H1 (cell line): ENCODE measurements at regions of chr2 and their contacts with region 1.

Region 1: DNA sequence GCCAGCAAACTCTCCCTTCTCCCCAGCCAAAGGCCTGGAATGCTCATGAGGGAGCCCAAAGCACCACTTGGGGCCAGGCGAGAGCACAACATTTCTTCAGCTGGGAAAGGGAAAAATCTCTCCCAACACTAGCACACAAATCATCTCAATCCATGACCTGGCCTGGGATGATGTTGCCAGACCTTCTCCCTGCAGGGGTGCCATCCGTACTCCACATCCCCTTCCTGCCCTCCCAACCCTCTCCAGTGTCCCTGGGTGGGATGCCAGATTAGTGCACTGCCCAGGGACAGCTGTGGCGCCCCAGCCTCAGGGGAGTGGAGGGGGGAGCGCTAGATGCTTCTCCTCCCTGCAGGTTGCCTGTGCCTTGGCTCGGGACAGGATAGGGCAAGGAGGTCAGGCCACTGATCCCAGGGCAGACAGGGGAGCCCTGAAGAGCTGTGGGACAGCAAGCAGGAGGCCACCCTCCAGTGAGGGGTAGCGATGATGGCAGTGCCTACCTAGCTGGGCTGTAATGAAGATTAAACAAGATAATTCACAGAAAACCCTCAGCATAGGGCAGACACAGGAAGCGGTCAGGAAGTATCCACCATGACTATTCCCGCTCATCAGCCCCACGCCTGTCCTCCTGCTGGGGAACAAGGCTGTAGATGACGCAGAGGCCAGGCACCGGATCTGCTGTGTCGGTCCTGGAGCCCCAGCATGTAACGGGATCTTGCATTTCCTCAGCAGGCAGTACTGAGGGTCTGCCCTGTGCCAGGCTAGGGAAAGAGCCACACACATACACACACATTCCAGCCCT is 31.1 kb downstream of the SERTAD2 start:
- DNase-seq: peak in 1 of 2 experiments; percentile 53
- H3K4me3 ChIP-seq: no peak overlapping the region
- H3K27ac ChIP-seq: no peak overlapping the region
- H3K4me1 ChIP-seq: peaks cover 3 to 21% (median 13%) of the 10 kb centered on the region in 4 experiments; a peak in 6 of 7 replicates
- H3K27me3 ChIP-seq: no peaks in the 10 kb centered on the region
- CTCF ChIP-seq: peak; percentile 28 to 48 (median 43)
- EP300 ChIP-seq: no peak
- POLR2A ChIP-seq: no peak
- RAD21 ChIP-seq: peak; percentile 39 to 44

Region 2: GRCh38 chr2:64243081-64244036 is 379.3 kb before region 1 on chr2:
- CTCF ChIA-PET with region 1: no interaction called
- POLR2A ChIA-PET with region 1: no interaction called
- DNase-seq: peak in 1 of 2 experiments; percentile 22
- H3K4me3 ChIP-seq: no peak overlapping the region
- H3K27ac ChIP-seq: no peak overlapping the region
- H3K4me1 ChIP-seq: peaks cover 0 to 18% (median 6%) of the 10 kb centered on the region in 4 experiments; a peak in 3 of 7 replicates
- H3K27me3 ChIP-seq: no peaks in the 10 kb centered on the region
- CTCF ChIP-seq: no peak
- EP300 ChIP-seq: no peak
- POLR2A ChIP-seq: no peak
- RAD21 ChIP-seq: no peak

Region 3: GRCh38 chr2:64383016-64383591 is 239.5 kb before region 1 on chr2:
- CTCF ChIA-PET with region 1: no interaction called
- POLR2A ChIA-PET with region 1: no interaction called
- DNase-seq: peak in 1 of 2 experiments; percentile 39
- H3K4me3 ChIP-seq: no peak overlapping the region
- H3K27ac ChIP-seq: no peak overlapping the region
- H3K4me1 ChIP-seq: peaks cover 0 to 2% (median 0%) of the 10 kb centered on the region in 4 experiments; a peak in 1 of 7 replicates
- H3K27me3 ChIP-seq: no peaks in the 10 kb centered on the region
- CTCF ChIP-seq: no peak
- EP300 ChIP-seq: no peak
- POLR2A ChIP-seq: no peak
- RAD21 ChIP-seq: no peak

Region 4: DNA sequence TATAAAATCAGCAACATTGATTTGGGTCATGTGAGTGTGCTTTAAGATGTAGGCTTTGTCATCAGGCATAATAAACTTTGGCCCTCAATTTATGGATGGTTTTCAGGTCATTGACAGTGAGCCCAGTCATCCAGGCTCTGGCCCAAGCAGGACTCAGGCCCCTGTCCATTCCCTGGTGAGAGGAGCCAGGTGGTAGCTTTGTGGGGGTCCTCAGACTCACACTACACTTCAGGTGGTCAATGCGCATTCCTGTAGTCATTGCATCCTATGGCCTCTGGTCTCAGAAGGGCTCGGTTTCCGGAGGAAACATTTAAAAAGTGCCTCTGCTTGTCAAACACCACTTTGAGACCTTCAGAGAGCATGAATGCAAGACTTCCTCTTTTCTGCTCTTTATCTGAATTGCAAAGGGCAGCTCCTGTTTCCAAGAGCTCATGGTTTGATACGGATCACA is 148.5 kb before region 1 on chr2:
- CTCF ChIA-PET with region 1: no interaction called
- POLR2A ChIA-PET with region 1: no interaction called
- DNase-seq: no peak
- H3K4me3 ChIP-seq: no peak overlapping the region
- H3K27ac ChIP-seq: no peak overlapping the region
- H3K4me1 ChIP-seq: peaks cover 0 to 9% (median 4%) of the 10 kb centered on the region in 4 experiments; a peak in 5 of 7 replicates
- H3K27me3 ChIP-seq: no peaks in the 10 kb centered on the region
- CTCF ChIP-seq: no peak
- EP300 ChIP-seq: no peak
- POLR2A ChIP-seq: no peak; a peak in 1 of 3 replicates
- RAD21 ChIP-seq: no peak

Region 5: DNA sequence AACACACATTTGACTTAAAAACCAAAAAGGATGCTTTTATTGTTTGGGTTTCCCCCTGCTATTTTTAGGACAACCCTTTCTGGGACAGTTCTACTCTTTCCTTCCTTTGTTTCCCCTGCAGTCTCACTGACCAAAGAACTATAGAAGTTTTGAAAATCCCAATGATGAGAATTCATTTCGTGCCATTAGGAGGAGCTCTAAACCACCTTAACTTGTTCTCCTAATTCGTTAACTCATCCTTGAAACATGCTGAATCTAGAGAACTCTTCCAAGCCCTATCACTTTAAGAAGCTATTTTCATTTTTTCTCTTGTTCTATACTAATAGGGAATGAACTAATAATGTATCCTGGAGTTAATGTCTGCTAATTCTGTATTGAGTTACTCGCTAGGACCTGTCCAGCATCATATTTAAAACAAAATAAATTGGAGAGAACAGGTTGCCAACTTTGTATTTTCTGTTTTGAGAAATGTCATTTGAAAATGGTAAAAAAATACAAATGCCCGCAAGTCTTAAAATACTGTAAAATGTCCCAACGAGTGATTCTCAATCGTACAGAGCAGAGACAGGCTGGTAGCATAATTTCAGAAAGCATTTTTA is 35.7 kb before region 1 on chr2:
- CTCF ChIA-PET with region 1: interaction called, 24 read pairs
- POLR2A ChIA-PET with region 1: no interaction called
- DNase-seq: no peak
- H3K4me3 ChIP-seq: no peak overlapping the region
- H3K27ac ChIP-seq: no peak overlapping the region
- H3K4me1 ChIP-seq: peaks cover 0 to 3% (median 0%) of the 10 kb centered on the region in 4 experiments; a peak in 1 of 7 replicates
- H3K27me3 ChIP-seq: no peaks in the 10 kb centered on the region
- CTCF ChIP-seq: peak in 2 of 3 experiments; percentile 51 to 65; a peak in 2 of 4 replicates
- EP300 ChIP-seq: no peak
- POLR2A ChIP-seq: no peak
- RAD21 ChIP-seq: peak; percentile 74 to 80

Region 6: GRCh38 chr2:64595397-64596160 is 27.1 kb before region 1 on chr2:
- CTCF ChIA-PET with region 1: interaction called, 26 read pairs
- POLR2A ChIA-PET with region 1: no interaction called
- DNase-seq: no peak
- H3K4me3 ChIP-seq: no peak overlapping the region
- H3K27ac ChIP-seq: no peak overlapping the region
- H3K4me1 ChIP-seq: no peaks in the 10 kb centered on the region
- H3K27me3 ChIP-seq: no peaks in the 10 kb centered on the region
- CTCF ChIP-seq: peak in 2 of 3 experiments; percentile 64 to 68; a peak in 3 of 4 replicates
- EP300 ChIP-seq: no peak
- POLR2A ChIP-seq: no peak
- RAD21 ChIP-seq: peak; percentile 73 to 84

Region 7: GRCh38 chr2:64609227-64609941 is 13.3 kb before region 1 on chr2:
- CTCF ChIA-PET with region 1: interaction called, 389 read pairs
- POLR2A ChIA-PET with region 1: interaction called, 3 read pairs
- DNase-seq: peak in 1 of 2 experiments; percentile 81
- H3K4me3 ChIP-seq: peak overlapping the region; percentile 54 to 79 (median 64)
- H3K27ac ChIP-seq: no peak overlapping the region
- H3K4me1 ChIP-seq: peaks cover 2 to 14% (median 6%) of the 10 kb centered on the region in 4 experiments
- H3K27me3 ChIP-seq: peaks cover 0 to 11% (median 9%) of the 10 kb centered on the region in 4 experiments; a peak in 6 of 7 replicates
- CTCF ChIP-seq: peak; percentile 58 to 76 (median 68)
- EP300 ChIP-seq: no peak
- POLR2A ChIP-seq: peak in 1 of 2 experiments; percentile 38; a peak in 1 of 3 replicates
- RAD21 ChIP-seq: peak in 1 of 2 experiments; percentile 49; a peak in 2 of 4 replicates

Region 8: GRCh38 chr2:64644177-64645004 is 21.7 kb after region 1 on chr2:
- CTCF ChIA-PET with region 1: interaction called, 389 read pairs
- POLR2A ChIA-PET with region 1: interaction called, 4 read pairs
- DNase-seq: peak; percentile 71 to 75
- H3K4me3 ChIP-seq: peak overlapping the region; percentile 48 to 64 (median 58)
- H3K27ac ChIP-seq: peak overlapping the region; percentile 49
- H3K4me1 ChIP-seq: peaks cover 6 to 22% (median 14%) of the 10 kb centered on the region in 4 experiments
- H3K27me3 ChIP-seq: peaks cover 4 to 19% (median 11%) of the 10 kb centered on the region in 4 experiments; a peak in 6 of 7 replicates
- CTCF ChIP-seq: no peak
- EP300 ChIP-seq: no peak; a peak in 1 of 3 replicates
- POLR2A ChIP-seq: peak; percentile 51 to 57; a peak in 2 of 3 replicates
- RAD21 ChIP-seq: no peak